Activated CD4-positive, alpha-beta T cell treated with anti-CD3 and anti-CD28 coated beads for 36 hours (primary cell): ENCODE measurements at regions of chr19 and their contacts with region 1.

Region 1: GRCh38 chr19:48492925-48493717 is 18.5 kb downstream of the LMTK3 start:
- DNase-seq: peak; percentile 98
- ATAC-seq: peak; percentile 81
- H3K4me3 Mint-ChIP-seq: peak overlapping the region; percentile 68
- H3K27ac Mint-ChIP-seq: peak overlapping the region; percentile 42
- H3K4me1 Mint-ChIP-seq: peaks cover 30% of the 10 kb centered on the region
- H3K27me3 Mint-ChIP-seq: peaks cover 39% of the 10 kb centered on the region

Region 2: GRCh38 chr19:48110350-48110966 is 382.7 kb before region 1 on chr19 and contains the start of gene PLA2G4C:
- CTCF ChIA-PET with region 1: no interaction called
- POLR2A ChIA-PET with region 1: no interaction called
- intact Hi-C with region 1: no loop called
- DNase-seq: peak; percentile 93
- ATAC-seq: peak; percentile 84
- H3K4me3 Mint-ChIP-seq: peak within 1 kb of the TSS; percentile 81
- H3K27ac Mint-ChIP-seq: peak within 1 kb of the TSS; percentile 95
- H3K4me1 Mint-ChIP-seq: peaks cover 20% of the 10 kb centered on the region
- H3K27me3 Mint-ChIP-seq: no peaks in the 10 kb centered on the region
- total RNA-seq, gene PLA2G4C: 11.5 to 12.4 TPM

Region 3: GRCh38 chr19:48170038-48170812 is 322.9 kb before region 1 on chr19 and contains the starts of genes LIG1 and ZSWIM9:
- CTCF ChIA-PET with region 1: no interaction called
- POLR2A ChIA-PET with region 1: no interaction called
- intact Hi-C with region 1: loop called in 1 of 2 experiments (anchors 1 kb)
- DNase-seq: peak; percentile 96
- ATAC-seq: peak; percentile 90
- H3K4me3 Mint-ChIP-seq: peak within 1 kb of the TSS; percentile 79
- H3K27ac Mint-ChIP-seq: peak within 1 kb of the TSS; percentile 95
- H3K4me1 Mint-ChIP-seq: peaks cover 30% of the 10 kb centered on the region
- H3K27me3 Mint-ChIP-seq: no peaks in the 10 kb centered on the region
- total RNA-seq, gene LIG1: 193 to 194 TPM
- total RNA-seq, gene ZSWIM9: 7.4 to 10.9 TPM

Region 4: DNA sequence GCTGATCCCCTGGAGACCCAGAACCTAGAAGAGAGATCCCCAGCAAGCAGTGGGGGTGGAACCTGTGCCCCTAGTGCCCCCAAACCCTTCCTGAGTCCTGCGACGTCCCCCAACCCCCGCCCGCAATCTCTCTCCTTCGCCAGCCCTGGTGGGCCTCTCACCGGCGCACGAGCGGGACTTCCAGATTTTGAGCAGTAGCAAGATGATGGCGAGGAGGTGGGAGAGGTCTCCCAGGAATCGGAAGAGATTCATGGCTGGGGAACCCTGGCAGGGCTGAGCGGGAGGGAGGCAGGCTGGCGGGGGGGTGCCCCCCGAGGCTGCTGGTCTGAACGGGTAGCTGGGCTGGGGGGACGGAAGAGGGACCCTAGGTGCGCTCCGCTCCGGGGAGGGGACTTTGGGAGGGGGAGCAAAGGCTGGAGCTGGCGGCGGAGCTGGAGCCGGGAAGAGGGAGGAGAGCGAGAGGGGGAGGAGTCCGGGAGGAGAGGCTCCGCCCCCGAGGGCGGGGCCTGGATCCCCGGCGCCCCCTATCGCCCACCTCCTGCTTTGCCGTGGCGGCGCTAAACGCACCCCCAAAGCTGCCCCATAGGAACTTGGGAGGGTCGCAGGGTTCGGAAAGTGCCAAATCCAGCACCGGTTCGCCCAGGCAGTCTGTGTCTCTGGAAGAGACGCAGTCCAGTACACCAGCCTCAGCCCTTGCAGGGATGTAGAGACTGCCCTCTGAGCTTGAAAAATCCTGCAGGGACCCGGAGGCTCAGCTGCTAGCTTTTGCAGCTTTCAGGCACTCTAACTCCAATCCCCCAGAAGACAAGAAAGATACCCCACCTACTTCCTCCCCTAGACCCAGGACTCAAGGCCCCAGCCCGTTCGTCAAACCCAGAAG is 101.8 kb before region 1 on chr19 and contains the start of gene KDELR1:
- CTCF ChIA-PET with region 1: interaction called, 8 read pairs
- POLR2A ChIA-PET with region 1: no interaction called
- intact Hi-C with region 1: loop called in 1 of 2 experiments (anchors 10 kb)
- DNase-seq: peak; percentile 85
- ATAC-seq: peak; percentile 82
- H3K4me3 Mint-ChIP-seq: peak within 1 kb of the TSS; percentile 92
- H3K27ac Mint-ChIP-seq: peak within 1 kb of the TSS; percentile 93
- H3K4me1 Mint-ChIP-seq: peaks cover 17% of the 10 kb centered on the region
- H3K27me3 Mint-ChIP-seq: peaks cover 19% of the 10 kb centered on the region
- total RNA-seq, gene KDELR1: 69.5 to 78.8 TPM

Region 5: GRCh38 chr19:48405850-48406249 is 87.3 kb before region 1 on chr19:
- CTCF ChIA-PET with region 1: no interaction called
- POLR2A ChIA-PET with region 1: no interaction called
- intact Hi-C with region 1: no loop called
- DNase-seq: no peak
- ATAC-seq: no peak
- H3K4me3 Mint-ChIP-seq: no peak overlapping the region
- H3K27ac Mint-ChIP-seq: no peak overlapping the region
- H3K4me1 Mint-ChIP-seq: peaks cover 2% of the 10 kb centered on the region
- H3K27me3 Mint-ChIP-seq: peaks cover 4% of the 10 kb centered on the region

Region 6: GRCh38 chr19:48445606-48446481 is 47.3 kb before region 1 on chr19 and contains the start of gene GRWD1:
- CTCF ChIA-PET with region 1: interaction called, 5 read pairs
- POLR2A ChIA-PET with region 1: no interaction called
- intact Hi-C with region 1: loop called in 1 of 2 experiments (anchors 1 kb)
- DNase-seq: peak; percentile 97
- ATAC-seq: peak; percentile 98
- H3K4me3 Mint-ChIP-seq: peak within 1 kb of the TSS; percentile 86
- H3K27ac Mint-ChIP-seq: peak within 1 kb of the TSS; percentile 89
- H3K4me1 Mint-ChIP-seq: peaks cover 37% of the 10 kb centered on the region
- H3K27me3 Mint-ChIP-seq: peaks cover 20% of the 10 kb centered on the region
- total RNA-seq, gene GRWD1: 43.4 to 51.3 TPM

Region 7: DNA sequence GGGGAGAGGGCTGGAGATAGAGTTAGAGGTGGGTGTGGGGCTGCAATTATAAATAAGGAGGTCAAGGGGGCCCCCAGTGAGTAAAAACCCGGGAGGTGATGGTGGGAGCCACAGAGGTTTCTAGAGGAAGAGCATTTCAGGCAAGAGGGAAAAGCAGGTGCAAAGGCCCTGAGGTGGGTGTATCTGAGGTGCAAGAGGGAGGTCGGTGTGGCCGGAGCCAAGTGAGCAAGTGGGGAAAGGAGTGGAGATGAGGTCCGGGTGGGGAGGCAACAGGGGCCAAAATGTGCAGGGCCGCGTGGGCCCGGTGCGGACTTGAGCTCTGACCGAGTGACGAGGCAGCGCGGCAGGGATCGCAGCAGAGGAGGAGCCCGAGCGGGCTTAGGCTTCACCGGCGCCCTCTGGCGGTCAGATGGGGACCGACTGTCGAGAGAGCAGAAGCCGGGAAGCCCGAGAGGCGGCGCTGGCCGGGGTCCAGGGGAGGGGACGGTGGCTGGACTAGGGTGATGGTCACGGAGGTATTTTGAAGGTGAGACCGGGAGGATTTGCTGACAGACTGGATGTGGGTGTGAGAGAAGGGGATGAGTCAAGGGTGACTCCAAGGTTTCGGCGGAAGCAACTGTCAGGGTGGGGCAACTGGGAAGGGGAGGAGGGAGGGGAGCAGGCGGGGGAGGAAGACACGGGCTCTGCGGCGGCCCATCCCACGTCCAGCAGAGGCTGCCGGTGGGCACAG is 95.7 kb after region 1 on chr19:
- CTCF ChIA-PET with region 1: interaction called, 40 read pairs
- POLR2A ChIA-PET with region 1: interaction called, 3 read pairs
- intact Hi-C with region 1: loop called (anchors 1 kb)
- DNase-seq: peak; percentile 94
- ATAC-seq: peak; percentile 89
- H3K4me3 Mint-ChIP-seq: peak overlapping the region; percentile 35
- H3K27ac Mint-ChIP-seq: peak overlapping the region; percentile 43
- H3K4me1 Mint-ChIP-seq: peaks cover 15% of the 10 kb centered on the region
- H3K27me3 Mint-ChIP-seq: no peaks in the 10 kb centered on the region

Region 8: GRCh38 chr19:48637170-48637947 is 144.2 kb after region 1 on chr19 and contains the start of gene DBP:
- CTCF ChIA-PET with region 1: interaction called, 6 read pairs
- POLR2A ChIA-PET with region 1: no interaction called
- intact Hi-C with region 1: loop called in 1 of 2 experiments (anchors 1 kb)
- DNase-seq: peak; percentile 98
- ATAC-seq: peak; percentile 75
- H3K4me3 Mint-ChIP-seq: peak within 1 kb of the TSS; percentile 83
- H3K27ac Mint-ChIP-seq: peak within 1 kb of the TSS; percentile 99
- H3K4me1 Mint-ChIP-seq: peaks cover 55% of the 10 kb centered on the region
- H3K27me3 Mint-ChIP-seq: no peaks in the 10 kb centered on the region
- total RNA-seq, gene DBP: 8.3 to 12.4 TPM

Region 9: DNA sequence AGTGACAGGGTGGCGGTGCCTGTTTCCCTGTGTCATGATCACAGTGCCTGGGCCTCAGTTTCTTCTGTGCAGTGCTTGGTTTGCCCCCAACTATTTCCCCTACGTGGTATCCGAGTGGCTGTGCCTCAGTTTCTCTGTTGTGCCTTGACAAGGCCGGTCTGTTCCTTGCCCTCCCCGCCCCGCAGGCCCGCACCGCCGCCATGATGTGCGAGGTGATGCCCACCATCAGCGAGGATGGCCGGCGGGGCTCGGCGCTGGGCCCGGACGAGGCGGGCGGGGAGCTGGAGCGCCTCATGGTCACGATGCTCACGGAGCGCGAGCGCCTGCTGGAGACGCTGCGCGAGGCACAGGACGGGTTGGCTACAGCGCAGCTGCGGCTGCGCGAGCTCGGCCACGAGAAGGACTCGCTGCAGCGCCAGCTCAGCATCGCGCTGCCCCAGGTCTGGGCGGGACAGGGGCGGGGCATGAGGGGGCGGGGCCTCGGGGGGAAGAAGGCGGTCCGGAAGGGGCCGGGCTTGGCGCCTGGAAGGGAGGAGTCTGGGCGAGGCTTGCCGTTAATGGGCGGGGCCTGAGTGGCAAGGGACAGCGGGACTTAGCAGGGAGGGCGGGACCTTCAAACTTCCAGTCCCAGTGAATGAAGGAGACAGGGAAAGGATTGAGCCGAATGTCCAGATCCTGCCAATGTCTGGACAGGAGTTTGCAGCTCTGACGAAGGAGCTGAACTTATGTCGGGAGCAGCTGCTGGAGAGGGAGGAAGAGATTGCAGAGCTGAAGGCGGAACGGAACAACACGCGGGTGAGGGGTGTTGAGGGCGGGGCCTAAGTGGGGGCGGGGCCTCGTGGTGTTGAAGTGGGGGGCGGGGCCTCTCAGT is 634.8 kb after region 1 on chr19:
- CTCF ChIA-PET with region 1: no interaction called
- POLR2A ChIA-PET with region 1: no interaction called
- intact Hi-C with region 1: loop called in 1 of 2 experiments (anchors 1 kb)
- DNase-seq: peak; percentile 98
- ATAC-seq: peak; percentile 95
- H3K4me3 Mint-ChIP-seq: peak overlapping the region; percentile 76
- H3K27ac Mint-ChIP-seq: peak overlapping the region; percentile 92
- H3K4me1 Mint-ChIP-seq: peaks cover 11% of the 10 kb centered on the region
- H3K27me3 Mint-ChIP-seq: no peaks in the 10 kb centered on the region